ENCODE measurements at regions of chr5 and their contacts with region 1.

Region 1: GRCh38 chr5:55601204-55601618 is 66.4 kb upstream of the PLPP1 start:
- DNase-seq: peak; percentile 71 to 94
- H3K4me3 ChIP-seq: peak overlapping the region; percentile 27; the same call in 1 of the 2 replicates
- H3K27ac ChIP-seq: peak overlapping the region; percentile 96
- H3K4me1 ChIP-seq: peaks cover 65% of the 10 kb centered on the region
- H3K27me3 ChIP-seq: no peaks in the 10 kb centered on the region
- CTCF ChIP-seq: no peak

Region 2: GRCh38 chr5:55534436-55535198 is 66.6 kb before region 1 on chr5 and contains the start of gene PLPP1:
- CTCF ChIA-PET with region 1: no interaction called
- POLR2A ChIA-PET with region 1: interaction called, 4 read pairs
- intact Hi-C with region 1: loop called (anchors 2 kb)
- DNase-seq: peak; percentile 72 to 92
- H3K4me3 ChIP-seq: peak within 1 kb of the TSS; percentile 95
- H3K27ac ChIP-seq: peak within 1 kb of the TSS; percentile 45
- H3K4me1 ChIP-seq: peaks cover 14% of the 10 kb centered on the region; the same call in 1 of the 2 replicates
- H3K27me3 ChIP-seq: no peaks in the 10 kb centered on the region
- CTCF ChIP-seq: no peak
- total RNA-seq, gene PLPP1: 12.2 and 18.4 TPM in 2 replicates

Region 3: DNA sequence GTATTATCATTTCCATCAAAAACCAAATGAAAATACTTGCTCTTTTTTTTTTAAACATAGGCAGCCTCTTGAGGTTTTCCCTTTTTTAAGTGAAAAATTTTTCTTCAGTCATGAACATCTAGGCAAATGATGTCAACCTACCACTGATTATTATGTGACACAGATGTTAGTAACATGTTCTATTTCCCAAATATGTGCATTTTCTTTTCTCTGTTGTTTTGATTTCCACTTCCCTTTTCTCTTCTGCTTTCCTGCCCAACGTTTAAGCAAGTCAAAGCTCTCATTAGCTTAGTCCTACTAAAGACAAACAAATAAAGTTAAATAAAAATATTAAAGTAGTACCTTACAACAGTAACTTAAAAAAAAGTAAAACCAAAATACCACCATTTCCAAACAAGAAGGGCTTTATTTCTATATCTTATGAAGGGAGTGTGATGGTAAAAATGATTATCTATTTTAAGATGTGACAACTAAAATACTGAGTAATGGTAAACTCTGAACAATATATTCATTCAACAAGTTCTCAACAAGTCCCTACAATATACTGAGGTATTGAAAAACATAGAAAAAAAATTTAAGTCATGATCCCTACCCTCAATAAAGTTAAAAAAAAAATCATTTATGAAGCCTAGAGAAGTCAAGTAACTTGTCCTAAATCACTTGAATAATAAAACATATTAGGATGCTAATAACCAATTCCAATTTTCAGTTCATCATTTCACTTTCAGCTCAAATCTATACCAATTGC is 101.6 kb after region 1 on chr5:
- CTCF ChIA-PET with region 1: no interaction called
- POLR2A ChIA-PET with region 1: interaction called, 38 read pairs
- intact Hi-C with region 1: no loop called
- DNase-seq: no peak
- H3K4me3 ChIP-seq: no peak overlapping the region
- H3K27ac ChIP-seq: no peak overlapping the region
- H3K4me1 ChIP-seq: no peaks in the 10 kb centered on the region
- H3K27me3 ChIP-seq: no peaks in the 10 kb centered on the region
- CTCF ChIP-seq: no peak

Measured in PC-9 (cell line).